H1 (cell line): ENCODE measurements at regions of chr16 and their contacts with region 1.

Region 1: GRCh38 chr16:77376358-77376757 is 58.5 kb downstream of the ADAMTS18 start:
- DNase-seq: peak in 1 of 2 experiments; percentile 63
- H3K4me3 ChIP-seq: no peak overlapping the region
- H3K27ac ChIP-seq: no peak overlapping the region
- H3K4me1 ChIP-seq: peaks cover 2 to 8% (median 3%) of the 10 kb centered on the region in 4 experiments; a peak in 4 of 7 replicates
- H3K27me3 ChIP-seq: no peaks in the 10 kb centered on the region
- CTCF ChIP-seq: peak; percentile 54 to 79 (median 76)
- EP300 ChIP-seq: no peak
- POLR2A ChIP-seq: no peak
- RAD21 ChIP-seq: peak; percentile 53 to 63

Region 2: DNA sequence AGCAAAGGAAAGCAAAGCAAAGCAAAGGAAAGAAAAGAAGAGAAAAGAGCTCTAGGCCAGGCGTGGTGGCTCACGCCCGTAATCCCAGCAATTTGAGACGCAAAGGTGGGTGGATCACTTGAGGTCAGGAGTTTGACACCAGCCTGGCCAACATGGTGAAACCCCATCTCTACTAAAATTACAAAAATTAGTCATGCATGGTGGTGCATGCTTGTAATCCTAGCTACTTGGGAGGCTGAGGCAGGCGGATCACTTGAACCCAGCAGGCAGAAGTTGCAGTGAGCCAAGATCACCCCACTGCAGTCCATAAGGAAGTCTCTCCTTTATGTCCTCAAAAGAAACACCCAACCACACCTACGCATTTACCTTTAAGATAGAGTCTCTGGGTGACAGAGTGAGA is 11.6 kb before region 1 on chr16:
- CTCF ChIA-PET with region 1: interaction called, 10 read pairs
- POLR2A ChIA-PET with region 1: no interaction called
- DNase-seq: no peak
- H3K4me3 ChIP-seq: no peak overlapping the region
- H3K27ac ChIP-seq: no peak overlapping the region
- H3K4me1 ChIP-seq: no peaks in the 10 kb centered on the region
- H3K27me3 ChIP-seq: no peaks in the 10 kb centered on the region
- CTCF ChIP-seq: no peak
- EP300 ChIP-seq: no peak
- POLR2A ChIP-seq: no peak
- RAD21 ChIP-seq: no peak

Region 3: GRCh38 chr16:77437859-77438258 is 61.5 kb after region 1 on chr16:
- CTCF ChIA-PET with region 1: interaction called, 24 read pairs
- POLR2A ChIA-PET with region 1: no interaction called
- DNase-seq: no peak
- H3K4me3 ChIP-seq: no peak overlapping the region
- H3K27ac ChIP-seq: no peak overlapping the region
- H3K4me1 ChIP-seq: peaks cover 0 to 4% (median 3%) of the 10 kb centered on the region in 4 experiments; a peak in 5 of 7 replicates
- H3K27me3 ChIP-seq: peaks cover 12 to 40% (median 33%) of the 10 kb centered on the region in 4 experiments
- CTCF ChIP-seq: peak in 2 of 3 experiments; percentile 52 to 53; a peak in 3 of 4 replicates
- EP300 ChIP-seq: no peak
- POLR2A ChIP-seq: no peak
- RAD21 ChIP-seq: peak; percentile 78 to 81